Endothelial cell of umbilical vein (primary cell): ENCODE measurements at regions of chrX and their contacts with region 1.

Region 1: DNA sequence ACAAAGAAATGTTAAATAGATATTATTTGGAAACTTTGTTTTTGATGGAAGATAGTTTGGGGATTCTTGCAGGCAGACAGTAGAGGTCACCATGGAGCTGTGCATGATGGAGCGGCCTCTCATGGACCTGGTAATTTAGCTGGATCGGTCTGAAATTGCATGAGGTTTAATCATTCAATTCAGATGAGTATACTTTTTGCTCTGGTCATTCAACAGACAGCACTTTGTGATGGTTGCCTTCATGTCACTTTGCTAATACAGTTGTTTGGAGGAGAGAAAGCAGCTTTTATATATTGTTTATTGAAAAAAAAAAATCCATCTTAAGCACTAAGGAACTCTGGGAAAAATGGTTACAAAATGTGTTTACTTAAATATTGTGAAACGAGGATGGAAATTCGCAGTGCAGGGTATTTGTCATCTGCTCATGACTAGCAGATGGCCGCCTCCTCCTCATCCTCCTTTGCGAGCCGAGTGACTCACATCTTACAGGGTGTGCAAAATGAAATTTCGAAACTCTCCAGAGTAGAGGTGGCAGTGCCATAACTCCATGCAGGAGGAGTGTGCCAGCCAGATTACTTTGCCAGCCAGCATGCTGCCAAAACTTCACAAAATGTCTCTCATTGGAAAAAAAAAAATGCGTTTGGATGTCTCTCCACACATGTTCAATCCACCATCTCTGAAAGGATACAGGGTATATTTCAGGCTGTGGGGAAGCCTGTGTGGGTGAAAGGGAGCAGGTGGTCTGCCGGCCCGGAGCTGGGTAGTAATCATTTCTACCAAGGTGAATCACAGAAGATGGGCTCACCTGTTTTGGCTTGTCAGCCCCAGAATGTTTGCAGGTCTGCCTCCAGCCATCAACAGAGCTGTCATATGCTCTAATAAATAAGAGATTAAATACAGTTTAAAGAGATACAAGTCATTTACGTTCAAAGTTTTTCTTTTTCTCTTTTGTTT is 314.9 kb upstream of the DIPK2B start:
- DNase-seq: peak; percentile 67
- H3K4me3 ChIP-seq: no peak overlapping the region
- H3K27ac ChIP-seq: peak overlapping the region; percentile 66
- H3K4me1 ChIP-seq: peaks cover 26% of the 10 kb centered on the region
- H3K27me3 ChIP-seq: no peaks in the 10 kb centered on the region
- CTCF ChIP-seq: peak; percentile 43 to 53
- POLR2A ChIP-seq: no peak

Region 2: DNA sequence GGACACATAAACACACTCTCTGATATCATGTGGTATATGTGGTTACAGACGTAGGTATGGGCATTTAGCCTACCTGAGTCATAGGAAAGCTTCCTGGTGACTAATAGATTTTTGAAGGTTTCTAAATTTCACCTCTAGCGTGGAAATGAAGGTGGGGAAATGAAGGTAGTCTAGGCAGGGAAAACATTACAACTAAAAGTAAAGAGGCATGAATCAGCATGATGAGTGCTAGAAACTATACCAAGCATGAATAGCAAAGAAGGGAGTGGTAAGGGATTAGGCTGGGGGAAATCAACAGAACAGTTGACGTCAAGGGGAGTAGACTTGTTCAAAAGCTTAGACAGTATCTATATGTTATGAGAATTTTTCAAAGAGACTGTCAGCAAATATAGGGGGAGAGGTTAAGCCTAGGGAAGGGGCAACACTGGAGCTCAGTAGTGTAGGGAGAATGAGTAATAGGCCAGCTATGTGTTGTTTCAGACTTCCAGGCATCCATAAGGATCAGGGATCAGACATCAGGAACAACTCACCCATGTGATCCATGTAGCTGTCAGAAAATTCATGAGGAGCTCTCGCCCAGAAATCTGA is 35.6 kb before region 1 on chrX:
- CTCF ChIA-PET with region 1: no interaction called
- POLR2A ChIA-PET with region 1: no interaction called
- dilution Hi-C with region 1: no loop called
- intact Hi-C with region 1: no loop called
- DNase-seq: peak; percentile 79
- H3K4me3 ChIP-seq: no peak overlapping the region
- H3K27ac ChIP-seq: peak overlapping the region; percentile 98
- H3K4me1 ChIP-seq: peaks cover 26% of the 10 kb centered on the region
- H3K27me3 ChIP-seq: no peaks in the 10 kb centered on the region
- CTCF ChIP-seq: no peak
- POLR2A ChIP-seq: no peak

Region 3: GRCh38 chrX:45743081-45743533 is 227.6 kb after region 1 on chrX:
- CTCF ChIA-PET with region 1: interaction called, 10 read pairs
- POLR2A ChIA-PET with region 1: no interaction called
- dilution Hi-C with region 1: no loop called
- intact Hi-C with region 1: no loop called
- DNase-seq: peak; percentile 61
- H3K4me3 ChIP-seq: no peak overlapping the region
- H3K27ac ChIP-seq: no peak overlapping the region
- H3K4me1 ChIP-seq: no peaks in the 10 kb centered on the region
- H3K27me3 ChIP-seq: no peaks in the 10 kb centered on the region
- CTCF ChIP-seq: peak; percentile 32 to 35
- POLR2A ChIP-seq: peak; percentile 73

Region 4: DNA sequence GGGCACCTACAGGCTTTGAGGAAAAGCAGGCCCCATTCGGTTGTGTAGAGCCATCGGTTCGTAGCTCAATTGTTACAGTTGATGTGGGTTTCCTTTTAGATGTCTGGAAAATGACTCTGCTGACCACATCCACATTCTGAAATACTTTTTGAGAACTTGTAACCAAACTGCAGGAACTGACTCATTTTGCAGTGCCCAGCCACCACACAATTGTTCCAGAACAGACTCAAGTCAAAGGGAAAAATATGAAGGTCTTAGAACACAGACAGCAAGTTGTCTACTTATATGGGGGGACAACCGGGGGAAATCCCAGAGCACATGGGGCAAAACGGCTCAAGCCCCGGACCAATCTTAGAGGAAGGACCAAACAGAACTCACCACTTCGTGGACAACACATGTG is 242.8 kb after region 1 on chrX:
- CTCF ChIA-PET with region 1: interaction called, 6 read pairs
- POLR2A ChIA-PET with region 1: no interaction called
- dilution Hi-C with region 1: no loop called
- intact Hi-C with region 1: loop called (anchors 2 kb)
- DNase-seq: peak; percentile 86
- H3K4me3 ChIP-seq: peak overlapping the region in 1 of 3 experiments; percentile 23
- H3K27ac ChIP-seq: peak overlapping the region; percentile 94
- H3K4me1 ChIP-seq: peaks cover 90% of the 10 kb centered on the region
- H3K27me3 ChIP-seq: no peaks in the 10 kb centered on the region
- CTCF ChIP-seq: no peak
- POLR2A ChIP-seq: no peak

Region 5: GRCh38 chrX:45824471-45824870 is 308.9 kb after region 1 on chrX:
- CTCF ChIA-PET with region 1: interaction called, 7 read pairs
- POLR2A ChIA-PET with region 1: no interaction called
- dilution Hi-C with region 1: no loop called
- intact Hi-C with region 1: loop called (anchors 1 kb)
- DNase-seq: peak; percentile 92
- H3K4me3 ChIP-seq: no peak overlapping the region
- H3K27ac ChIP-seq: peak overlapping the region; percentile 29
- H3K4me1 ChIP-seq: peaks cover 7% of the 10 kb centered on the region
- H3K27me3 ChIP-seq: no peaks in the 10 kb centered on the region
- CTCF ChIP-seq: peak; percentile 63 to 80
- POLR2A ChIP-seq: no peak

Region 6: GRCh38 chrX:46376246-46376885 is 860.8 kb after region 1 on chrX:
- CTCF ChIA-PET with region 1: interaction called, 9 read pairs
- POLR2A ChIA-PET with region 1: interaction called, 3 read pairs
- dilution Hi-C with region 1: no loop called
- intact Hi-C with region 1: loop called (anchors 1 kb)
- DNase-seq: peak; percentile 80
- H3K4me3 ChIP-seq: no peak overlapping the region
- H3K27ac ChIP-seq: no peak overlapping the region
- H3K4me1 ChIP-seq: peaks cover 4% of the 10 kb centered on the region
- H3K27me3 ChIP-seq: no peaks in the 10 kb centered on the region
- CTCF ChIP-seq: peak; percentile 21 to 32
- POLR2A ChIP-seq: no peak